Activated naive CD4-positive, alpha-beta T cell treated with anti-CD3 and anti-CD28 coated beads, Interleukin-2, amount 10 ng/mL, durations not matched to agents 7 days and 5 days (primary cell): ENCODE measurements at regions of chr14 and their contacts with region 1.

Region 1: DNA sequence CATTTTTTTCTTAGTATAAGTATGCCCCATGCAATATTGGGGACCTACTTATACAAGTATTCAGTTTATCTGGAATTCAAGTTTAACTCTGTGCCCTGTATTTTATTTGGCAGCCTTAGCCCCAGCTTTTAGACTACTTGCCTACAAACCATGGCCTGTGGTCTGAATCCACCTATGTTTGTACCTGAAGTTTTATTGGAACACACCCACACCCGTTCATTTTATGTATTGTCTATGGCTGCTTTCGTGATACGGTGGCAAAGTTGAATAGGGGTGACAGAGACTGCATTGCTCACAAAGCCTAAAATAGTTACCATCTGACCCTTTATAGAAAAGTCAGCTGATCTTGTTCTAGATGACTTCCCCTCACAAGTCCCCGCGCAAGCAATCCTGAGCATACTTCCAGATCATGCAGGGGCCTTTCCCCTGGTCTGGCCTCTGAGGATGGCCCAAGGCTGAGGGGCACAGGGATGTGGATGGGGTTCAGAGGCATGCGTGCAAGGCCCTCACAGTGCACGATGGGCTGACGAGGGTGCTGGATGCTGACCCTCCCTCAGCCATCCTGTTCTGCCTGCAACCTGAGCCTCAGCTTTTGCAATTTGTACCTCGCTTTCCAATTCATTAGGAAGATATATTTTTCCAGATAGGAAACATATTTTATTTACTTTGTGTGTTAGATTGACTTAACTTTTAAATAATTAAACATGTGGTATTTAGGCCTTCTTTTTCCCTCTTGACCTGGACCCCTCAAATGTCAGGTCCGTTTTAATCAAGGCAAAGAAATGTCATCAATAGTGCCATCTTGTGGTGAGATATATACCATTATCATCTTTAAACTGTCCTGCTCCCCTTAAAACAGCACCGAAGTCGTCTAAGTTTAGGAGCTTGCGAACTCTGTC is 527.3 kb upstream of the CCDC196 start:
- DNase-seq: no peak
- H3K4me3 Mint-ChIP-seq: no peak overlapping the region
- H3K27ac Mint-ChIP-seq: peak overlapping the region; percentile 74
- H3K4me1 Mint-ChIP-seq: peaks cover 28% of the 10 kb centered on the region
- H3K27me3 Mint-ChIP-seq: peaks cover 9% of the 10 kb centered on the region

Region 2: DNA sequence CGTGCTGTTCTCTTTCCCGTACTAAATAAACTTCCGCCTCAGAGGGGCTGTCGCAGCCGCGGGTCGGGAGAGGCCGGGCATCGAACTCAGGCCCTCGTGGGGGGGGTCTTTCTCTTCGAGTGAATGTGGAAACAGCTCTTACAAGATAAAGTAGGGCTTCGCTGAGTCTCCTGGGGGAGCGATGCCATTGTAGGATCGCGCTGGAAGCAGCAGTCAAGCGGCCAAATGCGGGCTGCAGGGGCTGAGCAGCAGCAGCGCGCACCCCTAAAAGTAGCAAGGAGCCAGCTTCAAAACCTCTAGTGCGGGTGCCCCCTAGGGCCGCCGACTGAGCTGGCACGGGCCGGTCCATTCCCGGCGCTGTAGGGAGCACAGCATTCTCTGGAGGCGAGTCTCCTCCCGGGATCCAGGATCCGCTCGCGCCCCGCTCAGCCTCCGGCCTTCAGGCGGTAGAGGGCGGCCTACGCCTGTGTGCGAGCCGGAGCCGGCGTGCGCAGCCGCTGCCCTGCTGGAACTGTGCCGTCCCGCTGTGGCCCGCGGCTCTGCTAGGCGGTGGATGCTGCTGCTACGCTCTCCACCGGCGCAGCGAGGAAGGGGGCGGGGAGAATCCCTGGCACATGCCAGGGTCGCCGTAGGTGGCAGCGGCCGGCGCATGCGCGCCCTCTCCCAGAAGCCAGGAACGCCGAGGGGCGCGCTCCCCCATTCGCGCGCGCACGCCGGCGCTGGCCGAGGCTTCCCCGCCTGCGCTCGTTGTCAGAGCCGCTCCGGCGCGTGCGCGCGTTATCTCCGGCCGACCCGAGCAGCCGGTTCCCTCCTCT is 546.7 kb before region 1 on chr14 and contains the start of gene FUT8:
- CTCF ChIA-PET with region 1: interaction called, 38 read pairs
- DNase-seq: peak; percentile 95
- H3K4me3 Mint-ChIP-seq: peak within 1 kb of the TSS; percentile 99
- H3K27ac Mint-ChIP-seq: peak within 1 kb of the TSS; percentile 97
- H3K4me1 Mint-ChIP-seq: peaks cover 41% of the 10 kb centered on the region
- H3K27me3 Mint-ChIP-seq: no peaks in the 10 kb centered on the region

Region 3: GRCh38 chr14:65658202-65658601 is 300.7 kb before region 1 on chr14:
- CTCF ChIA-PET with region 1: no interaction called
- DNase-seq: no peak
- H3K4me3 Mint-ChIP-seq: no peak overlapping the region
- H3K27ac Mint-ChIP-seq: no peak overlapping the region
- H3K4me1 Mint-ChIP-seq: no peaks in the 10 kb centered on the region
- H3K27me3 Mint-ChIP-seq: no peaks in the 10 kb centered on the region

Region 4: GRCh38 chr14:65847075-65847847 is 111.7 kb before region 1 on chr14:
- CTCF ChIA-PET with region 1: interaction called, 21 read pairs
- DNase-seq: peak; percentile 89
- H3K4me3 Mint-ChIP-seq: peak overlapping the region; percentile 41
- H3K27ac Mint-ChIP-seq: peak overlapping the region; percentile 95
- H3K4me1 Mint-ChIP-seq: peaks cover 84% of the 10 kb centered on the region
- H3K27me3 Mint-ChIP-seq: no peaks in the 10 kb centered on the region

Region 5: GRCh38 chr14:65879248-65880009 is 79.5 kb before region 1 on chr14:
- CTCF ChIA-PET with region 1: interaction called, 21 read pairs
- DNase-seq: no peak
- H3K4me3 Mint-ChIP-seq: no peak overlapping the region
- H3K27ac Mint-ChIP-seq: no peak overlapping the region
- H3K4me1 Mint-ChIP-seq: peaks cover 2% of the 10 kb centered on the region
- H3K27me3 Mint-ChIP-seq: no peaks in the 10 kb centered on the region

Region 6: DNA sequence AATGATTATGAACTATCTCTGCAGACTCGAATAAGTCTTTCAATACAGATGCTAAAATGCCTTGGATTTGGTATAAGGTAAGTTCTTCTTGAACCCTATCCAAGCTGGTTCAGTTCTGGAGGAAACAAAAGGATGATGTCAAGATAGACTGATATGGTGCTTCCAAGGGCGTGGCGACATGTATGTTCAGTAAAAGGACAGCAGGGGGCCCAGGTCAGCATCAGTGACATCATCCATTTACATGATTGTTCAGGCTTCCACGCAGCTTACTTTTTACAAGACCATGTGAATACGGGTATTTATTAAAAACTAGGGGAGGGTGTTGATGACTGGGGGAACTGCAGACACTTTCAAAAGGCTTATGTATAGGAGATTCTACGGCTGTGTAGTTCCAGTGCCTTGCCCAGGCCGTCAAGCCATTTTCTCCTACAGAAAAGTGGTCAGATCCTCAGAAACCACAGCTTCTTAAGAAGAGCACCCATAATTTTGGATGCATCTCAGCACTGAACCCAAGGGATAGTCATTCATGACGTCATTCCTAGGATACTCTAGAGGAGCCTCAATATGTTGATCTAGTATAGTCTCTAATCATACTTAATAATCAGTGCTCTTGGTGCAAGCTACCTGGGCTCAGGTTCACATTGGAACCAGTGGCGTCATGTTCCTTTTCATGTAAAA is 18.7 kb before region 1 on chr14:
- CTCF ChIA-PET with region 1: interaction called, 18 read pairs
- DNase-seq: peak; percentile 29
- H3K4me3 Mint-ChIP-seq: no peak overlapping the region
- H3K27ac Mint-ChIP-seq: peak overlapping the region; percentile 59
- H3K4me1 Mint-ChIP-seq: peaks cover 70% of the 10 kb centered on the region
- H3K27me3 Mint-ChIP-seq: no peaks in the 10 kb centered on the region